T-cell (primary cell): ENCODE measurements at regions of chr11 and their contacts with region 1.

Region 1: DNA sequence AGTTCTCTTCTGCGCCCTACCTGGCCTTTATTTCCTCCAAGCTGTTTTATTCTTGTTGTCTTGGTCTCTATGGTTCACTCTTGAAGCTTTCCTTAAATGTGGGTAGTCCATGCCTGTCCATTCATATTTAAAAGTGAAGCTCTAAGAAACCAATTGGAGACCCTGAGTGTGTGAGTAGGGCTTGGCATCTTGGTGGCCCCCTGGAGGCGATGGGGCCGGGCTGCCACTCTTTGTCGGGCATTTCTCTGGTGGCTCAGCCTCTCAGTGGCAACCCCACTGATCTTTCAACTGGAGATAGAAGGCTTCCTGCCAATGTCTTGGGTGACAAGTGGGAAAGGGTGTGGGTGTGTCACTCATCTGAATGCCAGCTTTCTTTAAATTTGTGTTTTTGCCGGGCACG is 9.1 kb downstream of the TRPT1 start:
- DNase-seq: peak in 1 of 35 experiments; percentile 28
- ATAC-seq: peak in 3 of 4 experiments; percentile 41 to 50 (median 43)
- H3K4me3 ChIP-seq: no peak overlapping the region
- H3K4me3 Mint-ChIP-seq: no peak overlapping the region
- H3K27ac ChIP-seq: no peak overlapping the region
- H3K27ac Mint-ChIP-seq: peak overlapping the region in 1 of 2 donors; percentile 34
- H3K4me1 ChIP-seq: peaks cover 0 to 15% of the 10 kb centered on the region in 2 experiments
- H3K4me1 Mint-ChIP-seq: peaks cover 3 to 17% (median 16%) of the 10 kb centered on the region in 3 donors
- H3K27me3 ChIP-seq: no peaks in the 10 kb centered on the region
- H3K27me3 Mint-ChIP-seq: no peaks in the 10 kb centered on the region

Region 2: DNA sequence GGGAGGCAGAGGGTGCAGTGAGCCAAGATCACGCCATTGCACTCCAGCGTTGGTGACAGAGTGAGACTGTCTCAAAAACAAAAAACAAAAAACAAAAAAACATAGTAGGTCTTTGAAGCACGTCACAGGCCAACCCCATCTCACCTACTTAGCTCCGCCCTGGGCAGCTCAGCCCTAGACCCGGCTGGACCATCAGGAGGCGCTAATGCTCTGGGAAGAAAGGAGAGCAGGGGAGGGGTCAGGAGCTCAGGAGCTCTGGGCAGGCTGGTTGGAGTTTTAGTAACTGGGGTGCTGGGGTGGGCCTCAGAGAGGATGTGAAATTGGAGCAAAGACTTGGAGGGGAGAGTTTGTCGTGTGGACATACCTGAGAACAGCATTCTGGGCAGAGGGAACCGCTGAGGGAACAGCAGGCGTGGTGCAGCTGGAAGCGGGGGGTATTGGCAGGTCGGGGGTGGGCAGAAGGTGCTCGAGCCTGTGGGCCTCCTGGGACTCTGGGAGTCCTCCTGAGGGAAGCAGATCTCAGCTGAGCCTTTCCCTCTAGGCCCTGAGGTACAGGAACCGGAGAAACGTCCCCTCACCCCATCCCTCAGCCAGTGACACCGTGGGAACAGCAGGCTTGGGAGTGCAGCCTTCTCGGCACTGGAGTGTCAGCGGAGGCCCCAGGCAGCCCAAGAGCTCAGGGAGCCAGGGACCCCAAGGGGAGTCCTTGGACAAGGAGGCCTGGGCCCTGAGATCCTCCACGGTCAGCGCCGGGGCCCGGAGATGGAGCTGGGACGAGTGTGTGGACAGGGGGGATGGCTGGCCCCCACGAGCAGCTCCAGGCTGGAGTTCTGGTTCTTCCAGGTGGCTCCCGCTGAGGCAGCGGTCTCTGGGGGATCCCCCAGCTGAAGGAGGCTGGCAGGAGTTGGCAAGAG is 139.9 kb after region 1 on chr11:
- CTCF ChIA-PET with region 1: interaction called in 1 of 2 experiments, 13 read pairs
- POLR2A ChIA-PET with region 1: no interaction called
- DNase-seq: peak in 2 of 35 experiments; percentile 27 to 34
- ATAC-seq: no peak
- H3K4me3 ChIP-seq: no peak overlapping the region
- H3K4me3 Mint-ChIP-seq: peak overlapping the region in 2 of 3 donors; percentile 52 to 59
- H3K27ac ChIP-seq: no peak overlapping the region
- H3K27ac Mint-ChIP-seq: peak overlapping the region; percentile 63 to 84
- H3K4me1 ChIP-seq: peaks cover 14 to 47% of the 10 kb centered on the region in 2 experiments
- H3K4me1 Mint-ChIP-seq: peaks cover 24 to 35% (median 29%) of the 10 kb centered on the region in 3 donors
- H3K27me3 ChIP-seq: no peaks in the 10 kb centered on the region
- H3K27me3 Mint-ChIP-seq: no peaks in the 10 kb centered on the region